ENCODE measurements at regions of chr12 and their contacts with region 1.

Region 1: GRCh38 chr12:46459861-46460545 is 87.4 kb upstream of the SLC38A2 start:
- DNase-seq: peak; percentile 67
- ATAC-seq: peak; percentile 69
- H3K4me3 ChIP-seq: peak overlapping the region; percentile 12 to 47 (median 38)
- H3K4me3 Mint-ChIP-seq: peak overlapping the region; percentile 93
- H3K27ac ChIP-seq: peak overlapping the region; percentile 67 to 78
- H3K27ac Mint-ChIP-seq: peak overlapping the region; percentile 99
- H3K4me1 ChIP-seq: peaks cover 53 to 61% of the 10 kb centered on the region in 2 donors
- H3K4me1 Mint-ChIP-seq: peaks cover 59% of the 10 kb centered on the region
- H3K27me3 ChIP-seq: no peaks in the 10 kb centered on the region
- H3K27me3 Mint-ChIP-seq: no peaks in the 10 kb centered on the region
- CTCF ChIP-seq: no peak

Region 2: GRCh38 chr12:46442239-46442638 is 17.8 kb before region 1 on chr12:
- CTCF ChIA-PET with region 1: interaction called, 3 read pairs
- POLR2A ChIA-PET with region 1: interaction called, 11 read pairs
- intact Hi-C with region 1: no loop called
- DNase-seq: no peak
- ATAC-seq: no peak
- H3K4me3 ChIP-seq: no peak overlapping the region
- H3K4me3 Mint-ChIP-seq: no peak overlapping the region
- H3K27ac ChIP-seq: no peak overlapping the region
- H3K27ac Mint-ChIP-seq: no peak overlapping the region
- H3K4me1 ChIP-seq: no peaks in the 10 kb centered on the region
- H3K4me1 Mint-ChIP-seq: no peaks in the 10 kb centered on the region
- H3K27me3 ChIP-seq: no peaks in the 10 kb centered on the region
- H3K27me3 Mint-ChIP-seq: no peaks in the 10 kb centered on the region
- CTCF ChIP-seq: no peak

Region 3: DNA sequence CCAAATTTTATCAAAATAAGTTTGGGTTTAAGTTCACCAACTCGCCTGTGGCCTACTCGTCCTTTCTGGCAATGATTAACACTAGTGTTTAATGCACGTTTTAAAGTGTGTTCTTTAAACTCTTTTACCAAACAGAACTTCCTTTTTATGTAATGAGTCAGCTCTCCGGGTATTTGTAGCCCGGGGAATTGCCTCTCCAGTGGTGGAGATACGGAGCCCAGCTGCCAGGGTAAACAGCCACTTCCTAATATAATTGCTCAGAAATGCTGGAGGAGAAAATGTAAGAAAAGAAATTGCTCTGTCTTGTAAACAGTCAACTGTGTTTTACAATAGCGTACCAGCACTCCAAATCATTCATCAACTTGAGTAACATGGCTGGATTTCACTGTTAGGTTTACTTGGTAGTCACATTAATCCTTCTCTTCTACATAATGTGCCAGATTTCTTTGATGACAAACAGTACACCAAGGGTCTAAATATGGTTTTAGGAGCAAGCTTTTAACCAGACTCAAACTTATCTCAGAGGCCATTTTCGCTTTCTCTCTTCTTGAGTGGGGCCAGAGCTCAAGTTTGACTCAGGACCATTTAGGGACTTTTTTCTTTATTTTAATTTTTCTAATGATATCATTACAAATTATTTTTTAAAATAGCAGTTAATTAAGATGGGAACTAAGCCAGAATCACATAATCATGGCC is 13.8 kb after region 1 on chr12:
- CTCF ChIA-PET with region 1: interaction called, 4 read pairs
- POLR2A ChIA-PET with region 1: no interaction called
- intact Hi-C with region 1: loop called (anchors 2 kb)
- DNase-seq: peak; percentile 26
- ATAC-seq: no peak
- H3K4me3 ChIP-seq: peak overlapping the region in 3 of 5 experiments; percentile 28 to 43 (median 29)
- H3K4me3 Mint-ChIP-seq: peak overlapping the region; percentile 70
- H3K27ac ChIP-seq: peak overlapping the region in 1 of 2 donors; percentile 62
- H3K27ac Mint-ChIP-seq: peak overlapping the region; percentile 72
- H3K4me1 ChIP-seq: peaks cover 12 to 21% of the 10 kb centered on the region in 2 donors
- H3K4me1 Mint-ChIP-seq: peaks cover 18% of the 10 kb centered on the region
- H3K27me3 ChIP-seq: no peaks in the 10 kb centered on the region
- H3K27me3 Mint-ChIP-seq: no peaks in the 10 kb centered on the region
- CTCF ChIP-seq: no peak

Region 4: DNA sequence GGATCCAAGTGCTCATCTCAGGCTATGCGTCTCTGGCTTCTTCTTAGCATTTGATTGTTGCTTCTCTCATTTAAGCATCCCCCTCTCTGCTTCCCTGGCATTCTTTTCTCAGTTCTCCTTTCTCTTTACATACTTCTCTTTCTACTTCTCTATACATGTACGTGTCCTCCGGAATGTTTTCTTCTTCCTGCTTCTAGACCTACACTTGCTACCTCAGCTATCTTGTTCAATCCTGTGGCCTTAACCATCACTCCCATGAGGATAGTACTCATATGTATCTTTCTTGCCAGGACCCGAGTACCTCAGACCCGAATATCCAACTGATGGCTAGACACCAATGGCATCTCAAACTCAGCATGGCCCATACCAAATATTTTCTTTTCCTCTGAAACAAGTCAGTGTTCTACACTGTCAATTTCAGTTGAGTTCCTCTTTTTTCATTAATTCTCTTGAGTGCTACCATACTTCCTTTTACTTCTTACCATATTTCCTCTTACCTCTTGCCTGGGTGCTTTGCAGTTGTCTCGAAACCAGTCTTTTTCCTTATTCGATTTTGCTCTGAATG is 27.6 kb after region 1 on chr12:
- CTCF ChIA-PET with region 1: no interaction called
- POLR2A ChIA-PET with region 1: no interaction called
- intact Hi-C with region 1: loop called (anchors 1 kb)
- DNase-seq: peak; percentile 87
- ATAC-seq: peak; percentile 89
- H3K4me3 ChIP-seq: peak overlapping the region; percentile 7 to 30 (median 27)
- H3K4me3 Mint-ChIP-seq: no peak overlapping the region
- H3K27ac ChIP-seq: peak overlapping the region; percentile 67 to 85
- H3K27ac Mint-ChIP-seq: no peak overlapping the region
- H3K4me1 ChIP-seq: peaks cover 29 to 32% of the 10 kb centered on the region in 2 donors
- H3K4me1 Mint-ChIP-seq: peaks cover 10% of the 10 kb centered on the region
- H3K27me3 ChIP-seq: no peaks in the 10 kb centered on the region
- H3K27me3 Mint-ChIP-seq: no peaks in the 10 kb centered on the region
- CTCF ChIP-seq: peak; percentile 14

Measured in B cell (primary cell).